Posterior vena cava (tissue), 2 donors: ENCODE measurements at regions of chr20 and their contacts with region 1.

Region 1: GRCh38 chr20:9839626-9840025 is 750 bp upstream of the PAK5 start:
- DNase-seq: no peak

Region 2: DNA sequence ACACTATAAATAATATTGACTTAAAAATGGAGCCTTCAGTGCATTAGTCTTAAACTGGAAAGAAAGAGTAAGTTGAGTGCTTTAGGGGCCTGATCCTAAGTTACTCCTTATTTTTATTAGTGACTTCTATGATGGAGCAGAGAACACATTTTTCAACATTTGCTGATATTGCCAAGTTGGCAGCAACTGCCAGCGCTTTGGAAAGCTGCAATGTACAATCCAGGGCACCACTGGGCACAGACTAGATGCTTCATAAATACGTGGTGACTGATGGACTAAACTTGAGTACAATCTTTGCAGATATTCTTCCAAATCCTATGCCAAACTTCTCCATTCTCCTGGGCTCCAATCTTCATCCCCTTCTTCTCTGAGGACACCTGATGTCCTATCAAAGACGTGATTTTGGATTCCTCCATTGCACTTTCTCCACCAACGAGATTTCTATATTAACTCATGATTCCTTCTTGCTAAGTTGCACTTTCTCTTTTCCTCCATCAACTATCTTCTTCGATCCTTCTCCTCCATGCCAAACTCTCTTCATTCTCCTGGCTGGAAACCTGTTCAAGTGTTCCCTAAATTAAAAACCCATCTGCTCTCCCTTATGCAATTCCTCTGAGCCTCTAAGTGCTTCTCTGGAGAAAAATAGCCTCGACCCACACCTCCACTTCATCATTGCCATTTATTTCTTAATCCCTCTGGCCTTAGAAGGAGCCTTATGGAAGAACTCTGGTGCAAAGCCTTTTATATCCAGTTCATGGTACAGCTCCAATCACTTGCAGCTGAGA is 27.8 kb after region 1 on chr20:
- intact Hi-C with region 1: loop called in 1 of 2 experiments (anchors 1 kb)
- DNase-seq: no peak

Region 3: DNA sequence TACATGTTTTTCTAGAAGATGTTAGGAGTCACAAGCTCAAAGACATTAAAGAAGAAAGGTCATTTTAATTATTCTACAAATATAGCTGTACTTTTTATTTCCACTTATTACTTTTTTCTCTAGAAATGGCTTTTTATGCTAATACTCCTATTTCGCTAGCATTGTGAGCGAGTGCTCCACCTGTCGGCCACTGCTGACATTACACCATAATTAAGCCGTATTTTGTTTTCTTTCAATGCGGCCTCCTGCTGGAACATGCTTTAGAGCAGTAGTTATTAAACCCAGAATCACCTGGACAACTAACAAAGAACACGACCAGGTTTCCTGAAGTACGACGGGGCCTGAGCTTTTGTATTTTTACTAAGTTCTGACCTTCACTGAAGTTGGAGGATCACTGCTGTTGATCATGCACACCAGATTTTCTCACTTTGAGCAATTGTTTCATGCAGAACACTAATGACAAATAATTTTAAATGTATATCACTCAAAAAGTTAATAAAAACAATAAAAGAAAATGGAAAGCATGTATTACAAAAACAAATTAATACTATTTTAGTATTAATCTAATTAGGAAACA is 73.3 kb after region 1 on chr20:
- intact Hi-C with region 1: no loop called
- DNase-seq: no peak